PC-3 (cell line): ENCODE measurements at regions of chr12 and their contacts with region 1.

Region 1: DNA sequence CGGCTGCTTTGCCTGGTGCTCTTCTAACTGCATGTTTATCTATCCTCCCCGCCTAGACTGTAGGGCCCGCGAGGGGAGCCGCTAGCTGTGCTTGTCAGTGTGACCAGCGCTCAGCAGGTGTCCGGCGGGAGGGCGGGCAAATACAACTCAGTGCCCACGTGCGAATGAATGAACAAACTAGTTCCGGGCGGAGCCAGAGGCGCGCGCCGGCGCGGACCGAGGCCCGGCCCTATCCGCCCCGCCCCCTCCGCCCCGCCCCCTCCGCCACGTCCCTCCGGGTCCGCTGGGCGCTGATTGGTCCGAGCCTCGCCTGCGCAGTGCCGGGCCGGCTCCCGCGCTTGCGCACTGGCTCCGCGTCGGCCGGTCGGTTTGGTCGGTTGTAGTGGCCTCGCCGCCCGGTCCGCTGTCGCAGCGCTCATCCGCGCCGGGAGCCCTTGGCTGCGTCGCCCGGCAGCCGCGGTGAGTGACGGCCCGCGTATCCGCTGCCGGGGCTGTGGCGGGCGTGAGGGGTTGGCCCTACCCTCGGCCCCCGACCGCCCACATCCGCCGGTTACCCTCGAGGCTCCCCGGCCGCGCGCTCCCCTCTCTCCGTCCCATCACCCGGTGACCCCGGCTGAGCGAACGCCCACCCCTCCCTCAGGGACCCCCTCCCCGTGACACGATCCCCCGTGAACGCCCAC is 60.0 kb downstream of the DDX51 start:
- DNase-seq: peak; percentile 94
- ATAC-seq: peak; percentile 90
- H3K4me3 ChIP-seq: peak overlapping the region; percentile 81
- H3K27ac ChIP-seq: peak overlapping the region; percentile 56
- H3K4me1 ChIP-seq: peaks cover 19% of the 10 kb centered on the region
- H3K27me3 ChIP-seq: no peaks in the 10 kb centered on the region
- CTCF ChIP-seq: no peak

Region 2: DNA sequence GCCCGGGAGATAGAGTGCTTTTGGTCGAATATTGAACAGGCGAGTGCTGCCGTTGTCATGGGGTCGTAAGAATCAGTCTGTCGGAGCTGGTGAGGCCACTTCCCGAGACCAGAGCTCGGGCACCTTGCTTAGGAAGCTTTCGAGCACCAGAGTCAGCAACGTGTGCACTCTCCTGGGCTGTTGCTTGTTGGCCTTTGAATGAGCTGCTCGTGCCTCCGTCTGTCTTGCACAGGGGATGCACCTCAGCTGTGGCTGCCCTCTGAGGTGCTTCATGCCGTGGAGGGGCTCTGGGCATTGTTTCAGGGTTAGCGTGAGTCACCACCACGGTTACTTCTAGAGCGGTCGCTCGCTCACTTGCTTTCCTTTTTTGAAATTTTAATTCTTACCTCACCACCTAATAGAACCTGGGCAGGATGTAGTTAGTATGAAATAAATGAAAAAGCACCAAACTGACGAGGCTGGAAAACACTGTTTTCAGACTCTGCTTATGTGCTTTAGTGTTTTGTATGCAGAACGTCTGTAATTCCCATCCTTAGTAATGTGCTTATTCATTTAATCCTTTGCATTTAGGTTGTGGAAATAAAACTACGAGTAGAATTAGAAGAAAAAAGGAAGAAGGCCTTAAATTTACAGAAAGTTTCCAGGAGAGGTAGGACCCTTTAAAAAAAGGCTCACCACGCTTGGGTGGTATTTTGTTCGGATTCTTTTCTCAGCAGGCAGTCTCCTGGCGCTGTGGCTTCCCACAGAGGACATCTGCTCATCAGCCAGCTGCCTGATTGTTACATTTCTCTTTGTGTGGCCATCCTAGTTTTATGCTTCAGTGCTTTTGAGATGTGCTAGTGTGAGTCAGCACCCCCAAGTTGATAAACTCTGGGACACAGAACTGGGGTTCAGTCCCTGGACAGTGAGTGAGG is 93.8 kb before region 1 on chr12:
- CTCF ChIA-PET with region 1: no interaction called
- POLR2A ChIA-PET with region 1: no interaction called
- intact Hi-C with region 1: no loop called
- DNase-seq: no peak
- ATAC-seq: no peak
- H3K4me3 ChIP-seq: no peak overlapping the region
- H3K27ac ChIP-seq: no peak overlapping the region
- H3K4me1 ChIP-seq: no peaks in the 10 kb centered on the region
- H3K27me3 ChIP-seq: no peaks in the 10 kb centered on the region
- CTCF ChIP-seq: no peak

Region 3: DNA sequence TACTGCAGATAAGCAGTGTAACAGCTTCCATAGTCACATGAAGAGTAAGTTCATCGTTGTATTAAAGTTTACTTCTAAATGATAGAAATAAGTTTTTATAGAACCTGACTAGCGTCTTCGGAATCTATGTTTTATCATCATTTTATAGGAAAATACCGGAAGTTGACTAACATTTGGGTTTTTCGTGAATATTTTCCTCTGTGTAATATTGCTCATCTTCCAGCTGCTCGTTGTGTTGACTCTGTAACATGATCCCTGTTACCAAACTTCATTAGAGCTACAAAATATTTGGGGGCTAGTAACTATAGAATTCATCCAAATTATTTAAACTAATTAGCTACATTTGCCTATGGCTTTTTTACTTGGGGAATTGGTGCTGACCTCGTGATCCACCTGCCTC is 22.8 kb after region 1 on chr12:
- CTCF ChIA-PET with region 1: no interaction called
- POLR2A ChIA-PET with region 1: no interaction called
- intact Hi-C with region 1: loop called (anchors 2 kb)
- DNase-seq: peak; percentile 95
- ATAC-seq: peak; percentile 91
- H3K4me3 ChIP-seq: peak overlapping the region; percentile 36; the same call in 1 of the 2 replicates
- H3K27ac ChIP-seq: peak overlapping the region; percentile 60
- H3K4me1 ChIP-seq: peaks cover 20% of the 10 kb centered on the region
- H3K27me3 ChIP-seq: no peaks in the 10 kb centered on the region
- CTCF ChIP-seq: no peak

Region 4: GRCh38 chr12:132188451-132189298 is 104.6 kb after region 1 on chr12:
- CTCF ChIA-PET with region 1: no interaction called
- POLR2A ChIA-PET with region 1: no interaction called
- intact Hi-C with region 1: no loop called
- DNase-seq: no peak
- ATAC-seq: no peak
- H3K4me3 ChIP-seq: peak overlapping the region; percentile 87
- H3K27ac ChIP-seq: no peak overlapping the region
- H3K4me1 ChIP-seq: peaks cover 15% of the 10 kb centered on the region
- H3K27me3 ChIP-seq: peaks cover 15% of the 10 kb centered on the region; the same call in 1 of the 2 replicates
- CTCF ChIP-seq: no peak